Endothelial cell of umbilical vein (primary cell): ENCODE measurements at regions of chr7 and their contacts with region 1.

Region 1: GRCh38 chr7:41656366-41656765 is 46.5 kb downstream of the INHBA start:
- DNase-seq: peak; percentile 92
- H3K4me3 ChIP-seq: no peak overlapping the region
- H3K27ac ChIP-seq: peak overlapping the region; percentile 24
- H3K4me1 ChIP-seq: peaks cover 5% of the 10 kb centered on the region
- H3K27me3 ChIP-seq: no peaks in the 10 kb centered on the region
- CTCF ChIP-seq: no peak
- POLR2A ChIP-seq: no peak

Region 2: DNA sequence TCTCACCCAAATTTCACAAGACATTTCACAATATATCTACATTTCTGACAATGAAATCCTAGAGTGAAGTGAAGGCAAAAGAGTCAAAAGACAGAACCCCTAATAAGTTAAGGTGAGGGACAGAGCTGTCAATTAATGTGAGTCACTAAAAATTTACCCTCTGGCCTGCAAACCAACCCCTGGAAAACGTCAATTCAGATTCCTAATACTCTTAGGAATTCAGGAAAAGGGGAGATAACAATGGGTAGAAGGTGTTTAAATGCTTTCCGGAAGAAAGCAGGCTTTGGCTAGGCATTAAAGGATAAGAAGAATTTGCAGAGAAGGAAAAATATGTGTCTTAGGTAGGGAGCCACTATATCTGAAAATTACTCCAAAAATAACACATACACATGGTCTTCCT is 253.1 kb before region 1 on chr7:
- CTCF ChIA-PET with region 1: no interaction called
- POLR2A ChIA-PET with region 1: no interaction called
- dilution Hi-C with region 1: no loop called
- intact Hi-C with region 1: no loop called
- DNase-seq: no peak
- H3K4me3 ChIP-seq: no peak overlapping the region
- H3K27ac ChIP-seq: no peak overlapping the region
- H3K4me1 ChIP-seq: no peaks in the 10 kb centered on the region
- H3K27me3 ChIP-seq: no peaks in the 10 kb centered on the region
- CTCF ChIP-seq: no peak
- POLR2A ChIP-seq: no peak

Region 3: GRCh38 chr7:41640487-41640886 is 15.9 kb before region 1 on chr7:
- CTCF ChIA-PET with region 1: interaction called, 15 read pairs
- POLR2A ChIA-PET with region 1: no interaction called
- dilution Hi-C with region 1: no loop called
- intact Hi-C with region 1: no loop called
- DNase-seq: no peak
- H3K4me3 ChIP-seq: no peak overlapping the region
- H3K27ac ChIP-seq: no peak overlapping the region
- H3K4me1 ChIP-seq: no peaks in the 10 kb centered on the region
- H3K27me3 ChIP-seq: no peaks in the 10 kb centered on the region
- CTCF ChIP-seq: no peak
- POLR2A ChIP-seq: no peak